HEK293 (cell line): ENCODE measurements at regions of chr5 and their contacts with region 1.

Region 1: GRCh38 chr5:95781101-95781583 is 41.4 kb downstream of the GLRX start:
- H3K4me3 ChIP-seq: no peak overlapping the region
- H3K27ac ChIP-seq: no peak overlapping the region
- H3K4me1 ChIP-seq: no peaks in the 10 kb centered on the region
- CTCF ChIP-seq: peak; percentile 65

Region 2: DNA sequence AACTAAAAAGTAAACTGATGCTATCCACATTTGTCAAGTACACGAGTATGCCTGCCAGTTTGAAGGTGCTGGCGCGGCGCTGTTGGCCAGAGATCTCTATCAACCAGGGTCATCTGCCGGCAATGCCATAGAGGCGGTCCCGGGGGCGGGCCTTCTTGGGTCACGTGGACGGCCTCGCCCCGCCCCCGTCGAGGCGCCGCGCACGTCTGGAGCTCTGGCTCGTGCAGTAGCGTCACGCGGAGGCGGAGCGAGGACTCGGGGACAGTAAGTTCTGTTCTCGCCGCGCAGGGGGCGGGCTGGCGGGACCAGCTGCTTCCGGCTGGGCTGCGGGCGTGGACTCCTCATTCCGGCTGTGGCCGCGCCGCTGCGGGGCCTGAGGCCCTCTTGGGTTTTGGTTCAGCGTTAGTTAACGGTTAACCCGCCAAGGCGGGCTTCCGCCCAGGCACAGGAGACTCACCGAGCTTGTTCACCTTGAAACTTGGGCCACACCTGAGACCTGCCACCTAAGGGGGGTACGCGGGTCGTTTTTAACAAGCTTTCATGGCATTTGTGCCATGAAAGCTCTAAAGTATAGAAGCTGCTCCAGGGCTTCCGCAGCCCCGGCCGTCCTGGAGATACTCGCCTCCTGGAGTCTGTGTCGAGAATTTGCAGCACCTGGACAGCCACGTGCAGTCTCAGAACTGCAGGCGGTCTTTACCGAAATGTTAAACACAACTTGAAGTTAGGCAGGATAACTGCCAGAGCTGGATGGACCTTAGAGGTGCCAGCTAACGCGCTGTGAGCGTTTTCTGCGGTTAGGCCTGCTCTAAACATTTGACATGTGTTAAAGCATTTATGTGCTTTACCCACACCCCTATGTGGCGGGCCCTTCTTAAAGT is 134.3 kb before region 1 on chr5 and contains the start of gene RFESD:
- CTCF ChIA-PET with region 1: interaction called, 17 read pairs
- POLR2A ChIA-PET with region 1: interaction called, 5 read pairs
- H3K4me3 ChIP-seq: peak within 1 kb of the TSS; percentile 40
- H3K27ac ChIP-seq: peak within 1 kb of the TSS; percentile 79
- H3K4me1 ChIP-seq: peaks cover 5% of the 10 kb centered on the region; the same call in 1 of the 2 replicates
- CTCF ChIP-seq: 0 out of 2 replicates have a peak, but pooled peaks have one; percentile 37

Region 3: DNA sequence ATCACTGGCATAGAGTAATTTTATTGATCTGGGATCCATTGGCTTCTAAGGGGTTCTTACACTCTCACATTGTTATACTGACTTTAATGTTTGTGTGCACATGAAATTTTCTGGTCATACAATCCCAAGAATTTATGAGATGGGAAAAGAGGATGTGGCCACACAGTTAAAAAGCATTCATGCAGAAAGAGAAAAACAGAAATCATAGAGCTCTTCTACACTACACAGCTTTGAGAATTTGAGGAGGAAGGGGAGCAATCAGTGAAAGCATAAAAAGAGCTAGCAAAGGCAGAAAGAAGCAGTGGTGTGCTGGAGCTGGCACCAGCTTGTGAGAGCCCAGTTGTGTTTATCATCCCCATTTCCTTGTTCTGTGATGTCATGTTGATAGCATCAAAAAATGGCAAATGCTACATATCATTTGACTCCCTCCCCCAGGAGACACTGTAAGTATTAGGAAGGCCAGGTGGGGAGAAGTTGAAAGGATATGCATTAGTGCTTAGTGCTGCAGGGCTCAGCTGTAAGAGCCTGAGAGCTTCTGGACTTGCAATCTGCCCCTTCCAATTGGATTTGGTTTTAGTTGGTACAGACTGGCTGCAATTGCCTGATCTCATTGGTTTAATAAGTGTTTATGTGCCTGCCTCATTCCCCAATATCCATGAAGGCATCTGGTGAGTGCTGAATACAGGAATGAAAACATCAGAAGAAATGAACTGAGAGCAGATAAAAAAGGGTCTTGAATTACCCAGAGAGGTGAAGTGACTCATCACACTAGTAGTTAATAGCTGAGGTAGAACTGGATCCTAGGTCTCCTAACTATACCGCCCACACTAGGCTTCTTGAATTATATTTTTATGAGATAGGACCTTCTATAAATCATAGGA is 19.1 kb before region 1 on chr5:
- CTCF ChIA-PET with region 1: interaction called, 10 read pairs
- POLR2A ChIA-PET with region 1: no interaction called
- H3K4me3 ChIP-seq: no peak overlapping the region
- H3K27ac ChIP-seq: no peak overlapping the region
- H3K4me1 ChIP-seq: peaks cover 11% of the 10 kb centered on the region
- CTCF ChIP-seq: no peak

Region 4: GRCh38 chr5:95794070-95794516 is 13.0 kb after region 1 on chr5:
- CTCF ChIA-PET with region 1: interaction called, 20 read pairs
- POLR2A ChIA-PET with region 1: interaction called, 6 read pairs
- H3K4me3 ChIP-seq: no peak overlapping the region
- H3K27ac ChIP-seq: no peak overlapping the region
- H3K4me1 ChIP-seq: no peaks in the 10 kb centered on the region
- CTCF ChIP-seq: no peak

Region 5: GRCh38 chr5:95846554-95847260 is 65.6 kb after region 1 on chr5:
- CTCF ChIA-PET with region 1: interaction called, 86 read pairs
- POLR2A ChIA-PET with region 1: interaction called, 3 read pairs
- H3K4me3 ChIP-seq: no peak overlapping the region
- H3K27ac ChIP-seq: no peak overlapping the region
- H3K4me1 ChIP-seq: no peaks in the 10 kb centered on the region
- CTCF ChIP-seq: peak; percentile 73